Prostate gland (tissue), 2 donors: ENCODE measurements at regions of chr6 and their contacts with region 1.

Region 1: GRCh38 chr6:27078734-27079357 is 168.7 kb upstream of the PRSS16 start:
- DNase-seq: peak; percentile 45
- H3K4me3 ChIP-seq: peak overlapping the region in 1 of 2 donors; percentile 8
- H3K27ac ChIP-seq: no peak overlapping the region
- H3K4me1 ChIP-seq: no peaks in the 10 kb centered on the region
- H3K27me3 ChIP-seq: no peaks in the 10 kb centered on the region
- CTCF ChIP-seq: peak in 3 of 4 experiments; percentile 65 to 84 (median 80)
- POLR2A ChIP-seq: no peak

Region 2: DNA sequence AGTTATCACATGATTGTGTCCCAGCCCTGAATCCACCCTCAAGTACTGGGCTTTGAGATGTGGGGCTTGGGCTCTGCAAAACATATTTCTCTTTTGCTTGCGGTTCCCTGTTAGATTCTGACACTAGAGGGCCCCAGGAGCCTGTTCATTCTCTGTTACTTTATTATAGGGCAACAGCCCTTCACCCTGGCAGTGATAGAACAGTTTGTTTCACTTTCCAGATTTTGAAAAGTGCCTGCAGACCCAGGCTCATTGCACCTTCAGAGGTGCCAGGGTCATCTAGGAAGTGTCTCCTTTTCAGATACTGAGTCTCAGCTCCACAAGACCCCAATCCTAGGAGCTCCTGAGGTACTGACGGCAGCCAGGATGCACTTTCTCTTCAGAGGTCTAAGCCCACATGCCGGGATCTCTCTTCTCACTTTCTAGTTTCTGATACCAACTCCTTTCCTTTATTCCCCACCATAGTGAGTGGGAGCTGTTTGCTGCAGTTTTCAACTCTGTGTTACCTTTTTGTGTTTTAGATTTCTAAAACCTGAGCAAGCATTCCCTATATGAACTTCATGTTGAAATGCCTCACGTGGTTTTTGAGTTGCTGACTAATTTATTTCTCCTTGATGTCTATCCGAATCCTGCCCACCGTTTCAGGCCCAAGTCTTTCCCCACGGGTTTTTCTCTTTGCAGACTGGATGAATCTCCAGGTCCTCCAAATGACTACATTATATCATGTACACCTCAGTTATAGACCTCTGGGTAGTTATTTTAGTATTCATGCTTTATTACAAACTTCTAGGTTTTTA is 471.2 kb before region 1 on chr6:
- intact Hi-C with region 1: loop called (anchors 5 kb)
- DNase-seq: peak; percentile 55
- H3K4me3 ChIP-seq: no peak overlapping the region
- H3K27ac ChIP-seq: no peak overlapping the region
- H3K4me1 ChIP-seq: no peaks in the 10 kb centered on the region
- H3K27me3 ChIP-seq: no peaks in the 10 kb centered on the region
- CTCF ChIP-seq: peak; percentile 15 to 68 (median 50)
- POLR2A ChIP-seq: no peak

Region 3: DNA sequence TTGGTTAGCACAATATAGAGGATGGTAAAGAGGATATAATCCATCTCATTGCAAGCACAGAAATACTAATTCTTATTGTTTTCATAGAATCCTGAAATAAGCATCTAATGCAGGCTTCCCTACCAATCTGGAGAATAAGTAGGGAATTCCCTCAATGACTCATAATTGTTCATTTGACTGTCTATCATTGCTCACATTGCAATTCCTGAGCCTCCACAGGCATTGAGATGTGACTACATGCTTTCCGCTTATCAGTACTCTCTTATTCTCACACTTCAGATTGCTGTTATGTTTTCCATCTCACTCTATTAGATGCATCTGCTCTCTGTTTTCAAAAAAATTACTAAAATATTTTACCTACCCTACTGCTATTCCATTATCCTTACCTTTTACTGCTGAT is 47.5 kb before region 1 on chr6:
- intact Hi-C with region 1: no loop called
- DNase-seq: no peak
- H3K4me3 ChIP-seq: no peak overlapping the region
- H3K27ac ChIP-seq: no peak overlapping the region
- H3K4me1 ChIP-seq: no peaks in the 10 kb centered on the region
- H3K27me3 ChIP-seq: no peaks in the 10 kb centered on the region
- CTCF ChIP-seq: no peak
- POLR2A ChIP-seq: no peak

Region 4: DNA sequence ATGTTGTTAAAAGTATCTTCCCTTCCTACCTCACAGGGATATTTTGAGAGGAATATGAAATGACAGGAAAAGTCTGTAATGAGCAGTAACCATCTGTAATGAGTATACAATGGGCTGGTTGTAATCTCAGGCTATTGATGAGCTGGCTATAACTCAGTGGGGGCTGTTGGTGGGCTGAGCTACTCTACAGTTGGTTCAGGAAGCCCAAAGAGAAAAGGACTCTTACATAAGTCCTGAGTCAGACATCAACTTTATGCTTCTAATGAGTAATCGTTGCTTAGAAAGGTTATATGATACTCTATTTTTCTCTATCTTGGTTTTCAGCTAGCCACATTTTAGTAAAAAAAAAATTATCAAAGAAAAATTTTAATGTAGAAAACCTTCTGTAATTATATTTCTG is 336.1 kb after region 1 on chr6:
- intact Hi-C with region 1: no loop called
- DNase-seq: no peak
- H3K4me3 ChIP-seq: no peak overlapping the region
- H3K27ac ChIP-seq: no peak overlapping the region
- H3K4me1 ChIP-seq: no peaks in the 10 kb centered on the region
- H3K27me3 ChIP-seq: no peaks in the 10 kb centered on the region
- CTCF ChIP-seq: no peak
- POLR2A ChIP-seq: no peak